ENCODE measurements at regions of chr2 and their contacts with region 1.

Region 1: DNA sequence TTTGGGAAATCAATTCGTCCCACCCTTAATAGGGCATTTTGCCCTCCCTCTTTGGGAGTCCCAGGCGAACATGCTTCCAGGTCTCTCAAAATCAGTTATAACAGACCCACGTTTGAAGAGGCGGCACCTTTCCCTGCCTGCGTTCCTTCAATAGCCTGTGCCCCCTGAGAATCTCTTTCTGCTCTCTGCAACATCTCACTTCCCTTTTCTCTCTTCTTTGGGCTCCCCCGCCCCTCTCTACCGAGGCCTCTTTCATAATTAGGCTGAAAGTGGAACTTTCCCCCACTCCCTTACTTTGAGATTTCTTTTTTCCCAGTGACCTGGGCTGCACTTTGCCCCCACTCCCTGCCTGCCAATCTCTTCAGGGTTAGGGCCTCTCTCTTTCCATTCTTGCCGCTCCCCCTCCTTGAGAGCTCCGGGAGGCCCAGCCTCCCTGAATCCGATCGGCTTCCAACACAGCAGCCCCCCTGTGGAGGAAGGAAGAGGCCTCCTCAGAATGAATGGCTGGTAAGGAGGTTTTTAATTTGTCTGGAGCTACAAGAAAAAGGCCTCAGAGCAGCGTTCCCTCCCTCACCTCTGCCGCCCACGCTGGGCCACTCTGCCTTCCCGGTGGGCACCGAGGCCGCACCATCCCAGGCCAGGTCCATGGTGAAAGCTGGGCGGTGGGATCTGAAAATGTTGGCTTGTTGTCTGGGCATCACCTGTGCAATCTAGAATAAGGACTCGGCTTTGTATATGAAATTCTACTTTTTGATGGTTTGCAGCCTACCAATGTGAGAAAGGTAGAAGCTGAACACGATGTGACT is 162.6 kb upstream of the SIX3 start:
- DNase-seq: peak; percentile 73
- ATAC-seq: peak; percentile 96
- H3K4me3 ChIP-seq: peak overlapping the region; percentile 78
- H3K27ac ChIP-seq: peak overlapping the region; percentile 72
- H3K4me1 ChIP-seq: peaks cover 25% of the 10 kb centered on the region
- H3K27me3 ChIP-seq: no peaks in the 10 kb centered on the region
- CTCF ChIP-seq: 0 out of 6 replicates have a peak, but pooled peaks of 1 of the 3 experiments have one; percentile 0
- EP300 ChIP-seq: peak; percentile 35 to 75; a peak in 2 of 4 replicates
- POLR2A ChIP-seq: no peak
- RAD21 ChIP-seq: 0 out of 2 replicates have a peak, but pooled peaks have one; percentile 12

Region 2: DNA sequence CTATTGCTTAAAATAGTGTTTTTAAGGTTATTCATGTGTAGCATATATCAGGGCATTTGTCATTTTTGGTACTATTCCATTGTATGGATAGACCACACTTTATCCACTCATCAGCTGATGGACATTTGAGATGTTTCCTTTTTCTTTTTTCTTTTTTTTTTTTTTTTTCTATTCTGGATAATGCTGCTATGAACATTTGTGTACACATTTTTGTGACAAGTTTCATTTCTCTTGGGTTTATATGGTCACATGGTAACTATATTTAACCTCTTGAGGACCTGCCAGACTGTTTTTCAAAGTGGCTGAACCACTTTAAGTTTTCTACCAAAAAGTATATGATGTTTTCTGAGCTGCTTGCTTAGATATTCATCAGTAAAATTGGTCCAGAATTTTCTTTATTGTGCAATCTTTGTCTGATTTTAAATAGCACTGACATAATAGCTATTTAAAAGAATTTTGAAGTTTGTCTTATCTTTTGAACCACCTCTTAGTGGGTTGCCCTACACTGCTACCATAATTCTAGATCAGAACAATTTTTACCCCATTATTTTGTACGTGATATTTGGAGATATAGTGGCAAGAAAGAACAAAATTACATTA is 56.7 kb before region 1 on chr2:
- CTCF ChIA-PET with region 1: interaction called, 3 read pairs
- POLR2A ChIA-PET with region 1: interaction called, 3 read pairs
- RAD21 ChIA-PET with region 1: interaction called, 10 read pairs
- SMC1A ChIA-PET with region 1: interaction called, 5 read pairs
- in situ Hi-C with region 1: no loop called
- intact Hi-C with region 1: no loop called
- DNase-seq: peak; percentile 13
- ATAC-seq: peak; percentile 82
- H3K4me3 ChIP-seq: no peak overlapping the region
- H3K27ac ChIP-seq: peak overlapping the region; percentile 37; the same call in 1 of the 2 replicates
- H3K4me1 ChIP-seq: peaks cover 19% of the 10 kb centered on the region
- H3K27me3 ChIP-seq: no peaks in the 10 kb centered on the region
- CTCF ChIP-seq: no peak
- EP300 ChIP-seq: no peak
- POLR2A ChIP-seq: no peak
- RAD21 ChIP-seq: no peak

Region 3: GRCh38 chr2:44759823-44760222 is 19.1 kb before region 1 on chr2:
- CTCF ChIA-PET with region 1: interaction called, 4 read pairs
- POLR2A ChIA-PET with region 1: interaction called, 5 read pairs
- RAD21 ChIA-PET with region 1: interaction called, 3 read pairs
- SMC1A ChIA-PET with region 1: interaction called, 10 read pairs
- in situ Hi-C with region 1: no loop called
- intact Hi-C with region 1: no loop called
- DNase-seq: no peak
- ATAC-seq: no peak
- H3K4me3 ChIP-seq: no peak overlapping the region
- H3K27ac ChIP-seq: no peak overlapping the region
- H3K4me1 ChIP-seq: no peaks in the 10 kb centered on the region
- H3K27me3 ChIP-seq: no peaks in the 10 kb centered on the region
- CTCF ChIP-seq: no peak
- EP300 ChIP-seq: no peak
- POLR2A ChIP-seq: no peak
- RAD21 ChIP-seq: no peak

Region 4: DNA sequence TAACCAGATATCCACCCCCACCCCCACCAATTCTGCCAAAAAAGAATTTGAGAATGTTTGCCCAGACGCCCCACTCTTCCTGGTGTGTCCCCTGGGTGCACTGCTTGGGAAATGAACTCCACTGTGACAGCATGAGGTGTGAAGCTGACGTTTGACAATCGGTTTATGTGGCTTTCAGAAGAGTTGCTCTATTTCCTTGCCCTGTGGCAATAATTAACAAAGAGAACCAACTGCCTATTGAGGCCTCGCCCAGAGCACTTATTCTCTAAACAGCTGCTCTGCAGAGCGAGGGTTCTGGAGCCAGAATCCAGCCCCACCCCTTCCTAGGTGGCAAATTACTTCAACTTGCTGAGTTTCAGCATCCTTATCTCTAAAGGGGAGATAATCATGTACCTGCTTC is 46.8 kb after region 1 on chr2:
- CTCF ChIA-PET with region 1: no interaction called
- POLR2A ChIA-PET with region 1: interaction called, 4 read pairs
- RAD21 ChIA-PET with region 1: interaction called, 11 read pairs
- SMC1A ChIA-PET with region 1: interaction called, 10 read pairs
- in situ Hi-C with region 1: no loop called
- intact Hi-C with region 1: no loop called
- DNase-seq: no peak
- ATAC-seq: peak; percentile 93
- H3K4me3 ChIP-seq: no peak overlapping the region
- H3K27ac ChIP-seq: no peak overlapping the region
- H3K4me1 ChIP-seq: no peaks in the 10 kb centered on the region
- H3K27me3 ChIP-seq: no peaks in the 10 kb centered on the region
- CTCF ChIP-seq: no peak
- EP300 ChIP-seq: peak in 1 of 2 experiments; percentile 30; a peak in 1 of 4 replicates
- POLR2A ChIP-seq: no peak
- RAD21 ChIP-seq: no peak